ENCODE measurements at regions of chr19 and their contacts with region 1.

Region 1: DNA sequence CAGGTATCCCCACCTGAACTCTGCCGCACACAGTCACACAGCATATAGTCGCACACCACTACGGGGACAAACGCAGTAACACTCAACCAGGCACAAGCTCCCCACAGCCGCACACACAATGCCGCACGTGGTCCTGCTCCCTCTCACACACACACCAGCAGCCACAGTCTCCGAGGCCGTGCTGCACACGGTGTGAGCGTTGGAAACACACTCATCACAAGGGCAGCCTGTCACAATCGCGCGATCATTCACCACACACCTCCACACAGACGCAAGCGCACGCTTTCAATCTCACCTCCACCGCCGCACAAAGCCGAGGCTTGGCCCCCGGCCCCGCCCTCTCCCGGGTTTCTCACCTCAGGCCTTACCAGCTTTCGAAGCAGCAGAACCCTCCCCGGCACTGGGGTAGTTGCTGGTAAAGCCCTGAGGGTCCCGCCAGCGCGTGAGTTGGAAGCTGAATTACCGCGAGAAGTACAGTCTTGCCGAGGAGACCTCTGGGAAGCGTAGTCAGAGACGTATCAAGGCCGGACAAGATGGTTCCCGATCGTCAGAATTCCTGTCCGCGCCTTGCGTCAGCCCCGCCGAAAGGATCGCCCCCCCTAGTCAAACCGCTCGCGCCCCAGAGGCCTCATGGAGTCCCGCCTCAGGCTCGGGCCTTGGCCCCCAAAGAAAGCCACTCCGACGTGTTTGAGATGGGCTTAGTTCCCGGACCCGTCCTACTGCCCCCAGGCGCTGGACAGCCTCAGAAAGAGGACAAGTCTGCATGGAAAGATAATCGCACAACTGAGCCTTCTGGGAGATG is at the start of gene ZNF566:
- DNase-seq: peak; percentile 94 to 98
- H3K4me3 ChIP-seq: peak within 1 kb of the TSS; percentile 84 to 98 (median 94)
- H3K27ac ChIP-seq: peak within 1 kb of the TSS; percentile 95
- H3K4me1 ChIP-seq: no peaks in the 10 kb centered on the region; a peak in 1 of 7 replicates
- H3K27me3 ChIP-seq: no peaks in the 10 kb centered on the region
- CTCF ChIP-seq: peak in 1 of 3 experiments; percentile 20; a peak in 1 of 4 replicates
- EP300 ChIP-seq: peak in 1 of 2 experiments; percentile 23; a peak in 1 of 3 replicates
- POLR2A ChIP-seq: peak; percentile 85 to 88
- RAD21 ChIP-seq: no peak
- total RNA-seq, gene ZNF566: 16.1 and 16.6 TPM in 2 replicates

Region 2: DNA sequence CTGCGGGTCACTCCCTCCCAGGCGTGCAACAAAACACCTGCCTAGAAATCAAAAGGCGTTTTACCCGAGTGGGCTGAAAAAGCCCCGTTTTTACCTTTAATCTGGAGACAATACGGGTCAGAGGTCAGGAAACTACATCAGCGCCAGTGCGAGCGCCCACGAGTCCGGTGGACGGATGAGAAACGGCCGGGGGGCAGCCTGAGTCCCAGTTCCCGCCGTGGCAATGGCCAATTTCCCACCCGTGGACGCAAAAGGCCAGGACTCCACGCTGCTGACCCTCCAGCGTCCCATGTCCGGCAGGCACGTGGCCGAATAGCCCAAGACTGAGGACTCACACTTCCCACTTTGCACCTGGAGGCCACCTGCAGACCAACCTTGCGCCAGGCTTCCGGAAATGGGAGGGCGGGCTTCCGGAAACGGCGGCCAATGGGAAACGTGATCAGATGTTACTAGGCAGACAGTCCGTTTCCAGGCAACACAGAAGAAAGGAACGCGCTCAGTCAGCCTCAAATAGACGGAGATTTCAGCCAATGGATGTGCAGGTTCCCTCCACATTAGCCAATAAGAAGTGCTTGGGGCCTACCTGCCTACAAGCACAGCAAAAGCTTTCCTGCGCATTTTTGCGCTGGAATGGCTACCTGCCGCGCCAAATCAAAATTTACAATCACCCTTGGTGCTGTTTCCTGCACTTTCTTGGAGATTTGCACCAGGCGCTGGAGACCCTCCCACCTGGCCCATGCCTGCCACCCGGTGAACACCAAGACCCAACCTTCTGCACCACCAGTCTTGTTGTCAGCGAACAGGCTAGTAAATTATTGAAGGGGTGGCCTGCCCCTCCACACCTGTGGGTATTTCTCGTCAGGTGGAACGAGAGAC is 157.7 kb before region 1 on chr19:
- CTCF ChIA-PET with region 1: no interaction called
- POLR2A ChIA-PET with region 1: interaction called, 10 read pairs
- DNase-seq: peak; percentile 93 to 94
- H3K4me3 ChIP-seq: peak overlapping the region; percentile 77 to 95 (median 90)
- H3K27ac ChIP-seq: peak overlapping the region; percentile 96
- H3K4me1 ChIP-seq: peaks cover 0 to 3% (median under 1%) of the 10 kb centered on the region in 4 experiments; a peak in 3 of 7 replicates
- H3K27me3 ChIP-seq: no peaks in the 10 kb centered on the region
- CTCF ChIP-seq: peak in 1 of 3 experiments; percentile 3; a peak in 1 of 4 replicates
- EP300 ChIP-seq: no peak
- POLR2A ChIP-seq: peak; percentile 88 to 97
- RAD21 ChIP-seq: no peak

Region 3: DNA sequence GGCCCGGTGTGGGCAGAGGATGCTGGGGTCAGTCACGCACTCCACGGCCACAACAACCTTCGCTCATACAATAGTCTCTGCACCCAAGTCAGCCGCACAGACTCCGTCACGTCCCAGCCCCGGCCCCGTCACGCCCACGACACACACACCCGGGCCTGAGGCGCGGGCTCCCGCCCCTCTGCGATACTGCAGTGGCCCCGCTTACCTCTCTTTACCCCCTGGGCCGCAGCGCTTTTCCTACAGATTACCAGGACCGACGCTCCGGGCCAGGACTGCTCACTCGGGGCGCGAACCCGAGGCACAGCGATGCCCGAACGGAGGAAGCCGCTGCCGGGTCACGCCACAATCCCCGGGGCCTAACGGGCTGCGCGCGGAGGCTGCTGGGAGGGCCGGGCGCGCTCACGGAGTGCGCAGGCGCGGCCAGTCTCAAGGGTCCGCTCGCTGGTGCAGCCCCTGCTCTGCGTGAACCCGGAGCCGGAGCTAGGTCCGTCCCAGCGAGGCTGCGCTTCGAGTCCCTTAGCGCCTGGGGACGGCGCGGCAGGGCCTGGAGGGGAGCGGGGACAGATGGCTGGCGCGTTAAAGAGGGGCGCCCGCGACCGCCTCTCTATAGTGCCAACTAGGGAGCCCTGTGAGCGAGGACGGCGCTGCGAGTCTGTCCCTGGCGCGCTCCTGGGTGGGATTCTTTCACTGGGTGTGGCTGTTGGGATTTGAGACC is 70.9 kb before region 1 on chr19 and contains the start of gene ZFP82:
- CTCF ChIA-PET with region 1: interaction called, 4 read pairs
- POLR2A ChIA-PET with region 1: interaction called, 54 read pairs
- DNase-seq: peak; percentile 62 to 91
- H3K4me3 ChIP-seq: peak within 1 kb of the TSS; percentile 78 to 92 (median 84)
- H3K27ac ChIP-seq: peak within 1 kb of the TSS; percentile 48; the same call in 1 of the 2 replicates
- H3K4me1 ChIP-seq: no peaks in the 10 kb centered on the region; a peak in 3 of 7 replicates
- H3K27me3 ChIP-seq: peaks cover 0 to 32% (median 11%) of the 10 kb centered on the region in 4 experiments; a peak in 5 of 7 replicates
- CTCF ChIP-seq: no peak
- EP300 ChIP-seq: no peak
- POLR2A ChIP-seq: peak; percentile 37 to 61; a peak in 2 of 3 replicates
- RAD21 ChIP-seq: no peak
- total RNA-seq, gene ZFP82: 16.5 TPM in 2 replicates

Region 4: GRCh38 chr19:36547001-36547732 is 57.8 kb after region 1 on chr19:
- CTCF ChIA-PET with region 1: no interaction called
- POLR2A ChIA-PET with region 1: no interaction called
- DNase-seq: no peak
- H3K4me3 ChIP-seq: no peak overlapping the region
- H3K27ac ChIP-seq: no peak overlapping the region
- H3K4me1 ChIP-seq: no peaks in the 10 kb centered on the region
- H3K27me3 ChIP-seq: no peaks in the 10 kb centered on the region
- CTCF ChIP-seq: no peak
- EP300 ChIP-seq: no peak
- POLR2A ChIP-seq: no peak
- RAD21 ChIP-seq: no peak

Region 5: GRCh38 chr19:36573020-36573885 is 83.9 kb after region 1 on chr19 and contains the start of gene ZNF529:
- CTCF ChIA-PET with region 1: interaction called, 3 read pairs
- POLR2A ChIA-PET with region 1: interaction called, 15 read pairs
- DNase-seq: peak; percentile 86 to 88
- H3K4me3 ChIP-seq: peak within 1 kb of the TSS; percentile 93 to 100 (median 96)
- H3K27ac ChIP-seq: peak within 1 kb of the TSS; percentile 91
- H3K4me1 ChIP-seq: peaks cover 0 to 4% (median 0%) of the 10 kb centered on the region in 4 experiments; a peak in 2 of 7 replicates
- H3K27me3 ChIP-seq: no peaks in the 10 kb centered on the region
- CTCF ChIP-seq: peak in 1 of 3 experiments; percentile 14; a peak in 1 of 4 replicates
- EP300 ChIP-seq: no peak
- POLR2A ChIP-seq: peak; percentile 90 to 92
- RAD21 ChIP-seq: peak; percentile 11 to 20; a peak in 2 of 4 replicates
- total RNA-seq, gene ZNF529: 12.4 and 14.1 TPM in 2 replicates

Measured in H1 (cell line).